Left ventricle myocardium superior (tissue), 1 donor: ENCODE measurements at regions of chr9 and their contacts with region 1.

Region 1: GRCh38 chr9:20373263-20373662 is 249.0 kb downstream of the MLLT3 start:
- DNase-seq: no peak
- ATAC-seq: no peak

Region 2: GRCh38 chr9:20394969-20395368 is 21.7 kb after region 1 on chr9:
- intact Hi-C with region 1: loop called (anchors 2 kb)
- DNase-seq: no peak
- ATAC-seq: no peak